Aorta (tissue), 5 donors: ENCODE measurements at regions of chr5 and their contacts with region 1.

Region 1: DNA sequence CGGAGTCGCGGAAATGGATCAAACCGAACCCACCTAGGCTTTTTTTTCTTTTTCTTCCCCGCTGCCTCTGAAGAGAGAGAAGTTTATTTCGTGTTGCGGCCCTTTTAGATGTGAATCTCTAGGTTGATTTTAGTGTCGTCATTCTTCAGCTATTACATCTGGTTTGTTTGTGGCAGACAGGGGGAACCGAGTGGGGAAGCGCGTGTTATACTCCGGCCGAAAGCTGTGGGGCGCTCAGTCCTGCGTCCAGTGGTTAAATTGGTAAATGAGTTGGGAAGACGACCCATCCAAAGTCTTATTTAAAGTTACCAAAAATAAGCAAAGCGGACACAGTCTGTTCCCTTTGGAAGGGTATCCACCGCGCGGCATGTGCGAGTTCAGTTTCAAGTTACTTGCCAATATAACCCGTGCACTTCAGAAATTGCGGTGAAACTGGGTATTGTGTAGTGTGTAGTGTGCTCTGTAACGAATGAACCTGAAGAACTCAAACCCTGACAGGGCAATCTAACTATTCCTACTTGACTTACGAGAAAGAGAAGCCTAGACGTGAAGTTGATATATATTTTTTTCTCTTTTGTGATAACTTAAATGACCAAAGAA is 1.3 kb downstream of the MAN2A1 start:
- DNase-seq: peak; percentile 85 to 90
- ATAC-seq: peak; percentile 81
- H3K4me3 ChIP-seq: peak overlapping the region; percentile 62 to 81
- H3K27ac ChIP-seq: peak overlapping the region; percentile 78 to 97
- H3K4me1 ChIP-seq: peaks cover 5% of the 10 kb centered on the region in 2 donors
- H3K27me3 ChIP-seq: no peaks in the 10 kb centered on the region

Region 2: DNA sequence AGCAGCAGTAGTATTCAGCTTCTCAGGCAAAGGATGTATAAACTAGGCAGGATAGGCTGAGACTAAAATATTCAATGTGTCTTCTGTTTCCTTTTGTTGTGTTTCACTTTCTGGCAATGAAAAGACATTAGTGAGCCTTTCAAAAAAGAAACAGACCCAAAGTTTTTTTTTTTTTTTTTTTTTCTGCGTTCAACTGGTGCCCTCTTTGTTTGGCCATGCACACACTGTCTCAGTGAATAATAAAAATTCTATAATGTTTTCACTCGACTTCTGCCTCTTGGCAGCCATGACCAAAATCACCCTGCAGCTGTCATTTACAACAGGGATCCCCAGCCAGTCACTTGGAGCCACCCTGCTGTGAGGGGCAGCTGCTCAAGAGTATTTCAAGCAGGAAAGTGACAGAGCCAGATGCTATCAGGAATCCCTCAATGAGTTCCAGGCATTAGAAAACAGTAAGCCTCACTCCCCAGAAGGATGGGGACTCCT is 45.3 kb before region 1 on chr5:
- intact Hi-C with region 1: no loop called
- DNase-seq: no peak
- ATAC-seq: no peak
- H3K4me3 ChIP-seq: no peak overlapping the region
- H3K27ac ChIP-seq: no peak overlapping the region
- H3K4me1 ChIP-seq: peaks cover 0 to 4% of the 10 kb centered on the region in 2 donors
- H3K27me3 ChIP-seq: no peaks in the 10 kb centered on the region

Region 3: GRCh38 chr5:109719978-109720377 is 28.9 kb after region 1 on chr5:
- intact Hi-C with region 1: no loop called
- DNase-seq: no peak
- ATAC-seq: no peak
- H3K4me3 ChIP-seq: no peak overlapping the region
- H3K27ac ChIP-seq: no peak overlapping the region
- H3K4me1 ChIP-seq: no peaks in the 10 kb centered on the region
- H3K27me3 ChIP-seq: no peaks in the 10 kb centered on the region

Region 4: DNA sequence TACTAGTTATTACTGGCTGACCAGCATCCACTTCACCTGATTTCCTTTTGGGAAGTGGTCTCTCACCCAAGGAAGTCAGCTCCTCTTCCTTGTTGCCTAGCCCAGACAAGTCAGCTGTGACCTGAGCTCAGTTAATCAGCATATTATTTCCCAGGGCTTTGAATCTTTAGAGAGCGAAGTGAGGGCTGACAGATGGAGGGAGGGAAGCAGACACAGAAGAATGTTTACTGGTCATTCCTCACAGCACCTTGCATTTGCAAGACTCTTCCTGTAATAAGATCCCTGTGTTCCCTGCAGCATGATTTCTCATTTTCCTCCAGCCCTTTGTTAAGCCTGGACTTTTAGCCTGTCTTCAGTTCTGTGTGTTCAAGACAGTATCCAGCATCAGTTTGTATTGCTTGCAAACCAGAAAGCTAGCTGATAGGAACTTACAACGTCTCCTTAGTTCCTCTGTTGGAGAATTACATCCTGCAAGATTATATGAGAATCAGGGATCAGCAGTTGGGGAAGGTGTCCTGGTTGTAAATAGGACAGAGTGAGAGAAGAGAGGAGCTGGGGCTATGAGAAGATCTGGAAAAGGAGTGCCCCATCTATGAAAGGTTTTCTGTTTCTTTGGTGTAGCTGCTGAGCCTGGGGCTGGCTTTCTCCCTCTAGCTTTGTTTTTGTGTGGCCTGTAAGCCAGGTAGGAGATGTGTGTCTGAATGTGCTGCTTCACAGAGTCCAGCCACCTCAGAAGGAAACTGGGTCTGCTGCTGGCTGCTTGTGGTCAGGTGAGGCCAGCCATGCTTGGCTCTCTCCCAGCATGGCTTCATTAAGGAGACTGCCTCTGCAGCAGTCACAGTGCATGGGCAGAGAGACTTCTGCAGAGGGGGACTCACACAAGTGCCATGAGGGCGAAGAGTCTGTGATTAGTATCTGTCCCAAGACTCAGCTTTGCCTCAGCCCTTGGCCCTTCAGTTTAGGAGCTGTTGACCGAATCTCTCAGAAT is 49.0 kb after region 1 on chr5:
- intact Hi-C with region 1: loop called in 1 of 2 experiments (anchors 10 kb)
- DNase-seq: no peak
- ATAC-seq: peak; percentile 60
- H3K4me3 ChIP-seq: no peak overlapping the region
- H3K27ac ChIP-seq: peak overlapping the region in 1 of 2 donors; percentile 29
- H3K4me1 ChIP-seq: peaks cover 5 to 6% of the 10 kb centered on the region in 2 donors
- H3K27me3 ChIP-seq: no peaks in the 10 kb centered on the region

Region 5: DNA sequence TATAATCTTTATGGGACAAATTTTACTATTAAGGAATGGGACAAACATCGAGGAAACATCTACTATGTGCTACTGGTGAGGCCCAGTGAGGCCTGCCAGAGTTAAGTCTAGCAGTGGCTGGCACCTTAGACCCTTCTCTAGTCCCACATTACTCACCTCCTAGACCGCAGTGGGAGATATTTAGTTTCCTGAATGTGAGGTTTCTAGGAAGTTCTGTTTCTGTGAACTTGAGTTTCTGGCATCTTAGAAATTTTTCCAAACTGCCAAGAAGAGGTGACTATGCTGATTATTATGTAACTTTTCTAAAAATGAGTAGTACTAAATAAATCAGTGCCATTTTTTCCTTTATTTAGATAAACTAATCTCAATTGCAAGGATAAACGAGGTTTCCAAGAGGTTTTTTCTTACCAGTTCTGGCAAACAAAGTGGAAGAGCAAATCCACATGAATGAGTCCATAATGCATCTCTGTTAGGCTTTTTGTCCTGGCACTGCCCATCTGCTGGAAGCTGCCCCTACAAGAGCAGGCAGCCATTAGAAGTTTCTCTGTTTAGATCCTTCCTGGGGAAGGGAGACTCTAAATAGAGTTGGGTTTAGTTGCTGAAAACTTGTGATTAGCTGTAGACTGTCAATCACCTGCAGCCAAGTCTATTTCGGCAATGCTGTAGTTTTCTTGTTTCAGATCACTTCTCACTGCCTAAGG is 347.4 kb after region 1 on chr5:
- intact Hi-C with region 1: loop called in 1 of 2 experiments (anchors 5 kb)
- DNase-seq: peak in 1 of 2 donors; percentile 49
- ATAC-seq: peak; percentile 84
- H3K4me3 ChIP-seq: no peak overlapping the region
- H3K27ac ChIP-seq: peak overlapping the region in 1 of 2 donors; percentile 84
- H3K4me1 ChIP-seq: peaks cover 0 to 7% of the 10 kb centered on the region in 2 donors
- H3K27me3 ChIP-seq: no peaks in the 10 kb centered on the region

Region 6: DNA sequence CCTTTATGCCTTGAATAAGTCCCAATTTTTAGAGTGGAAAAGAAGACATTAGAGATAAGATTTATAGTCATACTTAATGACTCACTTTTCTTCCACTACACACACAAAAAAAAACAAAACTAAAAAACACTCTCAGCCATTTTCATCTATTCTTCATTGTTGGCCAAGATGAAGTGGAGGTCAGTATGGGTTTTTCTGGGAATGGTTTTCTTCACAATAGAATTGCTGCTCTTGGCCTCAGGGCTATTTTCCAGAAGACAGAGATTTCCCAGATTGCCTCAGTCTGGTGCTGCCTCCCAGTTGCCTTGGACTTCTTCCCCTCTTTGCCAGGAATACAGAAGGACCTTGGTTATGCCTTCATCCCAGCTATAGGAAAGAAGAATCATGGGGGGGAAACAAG is 571.7 kb after region 1 on chr5:
- intact Hi-C with region 1: loop called in 1 of 2 experiments (anchors 10 kb)
- DNase-seq: no peak
- ATAC-seq: peak; percentile 80
- H3K4me3 ChIP-seq: no peak overlapping the region
- H3K27ac ChIP-seq: peak overlapping the region in 1 of 2 donors; percentile 76
- H3K4me1 ChIP-seq: peaks cover 0 to 4% of the 10 kb centered on the region in 2 donors
- H3K27me3 ChIP-seq: no peaks in the 10 kb centered on the region

Region 7: DNA sequence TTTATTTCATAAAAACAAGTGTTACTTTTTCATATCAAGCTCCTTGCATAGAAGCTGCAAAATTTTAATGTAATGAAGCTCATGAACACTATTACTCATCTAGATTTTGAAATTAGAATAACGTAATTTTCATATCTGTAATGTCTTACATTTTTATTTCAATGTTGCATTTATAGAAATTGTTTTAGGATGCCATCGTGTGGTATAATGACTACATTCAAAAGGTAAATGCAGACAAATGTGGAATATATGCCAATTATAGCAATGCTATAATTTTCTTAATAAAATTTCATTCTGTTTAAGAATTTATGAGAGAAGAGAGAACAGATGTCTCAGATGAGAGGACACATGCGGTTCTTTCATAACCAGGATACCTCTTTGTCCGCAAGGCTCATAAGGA is 805.2 kb after region 1 on chr5:
- intact Hi-C with region 1: loop called in 1 of 2 experiments (anchors 10 kb)
- DNase-seq: no peak
- ATAC-seq: no peak
- H3K4me3 ChIP-seq: no peak overlapping the region
- H3K27ac ChIP-seq: no peak overlapping the region
- H3K4me1 ChIP-seq: no peaks in the 10 kb centered on the region
- H3K27me3 ChIP-seq: no peaks in the 10 kb centered on the region